ENCODE measurements at regions of chr4 and their contacts with region 1.

Region 1: DNA sequence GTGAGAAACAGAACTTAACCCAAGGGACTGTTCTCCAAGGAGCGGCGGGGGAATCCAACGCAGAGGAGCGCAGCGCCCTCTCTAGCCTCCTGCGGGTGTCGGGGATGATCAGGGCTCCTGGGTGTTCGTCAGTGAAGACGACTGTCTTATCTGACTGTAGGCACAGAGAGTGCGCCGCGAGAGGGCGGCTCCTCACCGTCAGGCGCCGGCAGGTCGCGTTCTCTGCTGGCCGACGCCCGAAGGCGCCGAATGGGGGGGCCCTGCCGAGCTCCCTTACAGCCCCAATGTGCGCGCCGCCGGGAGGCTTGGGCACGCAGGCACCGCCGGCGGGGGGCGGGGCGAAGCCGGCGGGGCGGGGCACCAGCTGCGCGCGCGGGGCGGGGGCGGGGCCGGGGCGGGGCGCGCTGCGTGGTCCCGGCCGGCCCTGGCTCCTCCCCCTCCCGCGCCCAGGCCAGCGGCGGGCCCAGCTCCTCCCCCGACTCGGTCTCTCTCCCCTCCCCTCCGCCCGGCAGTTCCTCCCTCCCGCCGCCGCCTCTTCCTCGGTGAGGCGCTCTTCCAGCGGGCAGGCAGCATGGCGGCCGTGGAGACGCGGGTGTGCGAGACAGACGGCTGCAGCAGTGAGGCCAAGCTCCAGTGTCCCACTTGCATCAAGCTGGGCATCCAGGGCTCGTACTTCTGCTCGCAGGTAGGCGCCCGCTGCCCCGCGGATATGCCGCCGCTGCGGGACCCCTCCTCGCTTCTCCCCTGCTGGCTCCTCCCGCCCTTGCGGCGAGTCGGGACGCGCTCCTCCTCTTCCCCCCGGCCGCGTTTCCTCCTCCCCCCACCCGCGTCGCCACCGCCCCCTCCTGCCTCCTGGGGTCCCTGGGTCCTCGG is at the start of gene METAP1:
- DNase-seq: peak; percentile 97
- ATAC-seq: peak; percentile 93
- H3K4me3 Mint-ChIP-seq: peak within 1 kb of the TSS; percentile 88
- H3K27ac Mint-ChIP-seq: peak within 1 kb of the TSS; percentile 97
- H3K4me1 Mint-ChIP-seq: peaks cover 26% of the 10 kb centered on the region
- H3K27me3 Mint-ChIP-seq: no peaks in the 10 kb centered on the region
- total RNA-seq, gene METAP1: 43.7 to 48.4 TPM

Region 2: DNA sequence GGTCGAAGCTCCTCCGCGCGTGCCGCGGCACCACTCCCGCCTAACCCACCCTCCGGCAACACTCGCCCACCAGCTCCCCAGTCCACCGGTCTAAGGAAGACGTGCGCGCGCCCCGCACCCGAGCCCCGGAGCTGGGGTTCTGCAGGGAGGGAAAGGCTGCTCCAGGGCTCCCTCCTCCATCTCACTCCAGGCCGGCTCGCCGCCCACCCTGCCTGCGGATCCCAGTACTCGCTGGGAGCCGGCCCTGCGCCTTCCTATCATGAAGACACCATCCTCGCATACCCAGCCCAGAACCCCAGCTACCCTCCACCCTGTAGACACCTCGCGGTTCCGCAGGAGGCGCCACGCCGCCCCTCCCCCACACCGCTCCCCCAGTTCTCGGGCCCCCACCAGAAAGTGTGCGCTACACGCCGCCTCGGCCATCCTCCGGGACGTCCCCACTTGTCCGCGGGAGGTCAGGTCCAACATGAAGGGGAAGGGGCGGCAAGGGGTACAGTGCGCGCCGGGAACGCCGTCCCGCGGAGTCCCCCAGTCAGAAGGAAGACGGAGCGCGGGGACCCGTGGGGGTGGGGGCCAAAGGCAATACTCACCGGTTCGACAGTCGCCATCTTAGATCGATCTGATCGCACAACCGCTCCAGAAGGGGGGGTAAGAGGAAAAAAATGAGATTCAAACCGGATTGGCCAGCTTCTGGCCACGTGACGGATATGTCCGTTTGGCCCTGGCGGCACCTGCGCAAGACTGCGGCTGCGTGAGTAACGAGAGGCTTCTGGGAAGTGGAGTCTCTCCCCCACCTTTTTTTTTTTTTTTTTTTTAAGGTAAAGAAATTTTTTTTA is 66.7 kb before region 1 on chr4 and contains the start of gene EIF4E:
- CTCF ChIA-PET with region 1: interaction called, 29 read pairs
- DNase-seq: peak; percentile 99
- ATAC-seq: peak; percentile 77
- H3K4me3 Mint-ChIP-seq: peak within 1 kb of the TSS; percentile 89
- H3K27ac Mint-ChIP-seq: peak within 1 kb of the TSS; percentile 100
- H3K4me1 Mint-ChIP-seq: peaks cover 38% of the 10 kb centered on the region
- H3K27me3 Mint-ChIP-seq: no peaks in the 10 kb centered on the region
- total RNA-seq, gene EIF4E: 92.1 to 122 TPM

Region 3: DNA sequence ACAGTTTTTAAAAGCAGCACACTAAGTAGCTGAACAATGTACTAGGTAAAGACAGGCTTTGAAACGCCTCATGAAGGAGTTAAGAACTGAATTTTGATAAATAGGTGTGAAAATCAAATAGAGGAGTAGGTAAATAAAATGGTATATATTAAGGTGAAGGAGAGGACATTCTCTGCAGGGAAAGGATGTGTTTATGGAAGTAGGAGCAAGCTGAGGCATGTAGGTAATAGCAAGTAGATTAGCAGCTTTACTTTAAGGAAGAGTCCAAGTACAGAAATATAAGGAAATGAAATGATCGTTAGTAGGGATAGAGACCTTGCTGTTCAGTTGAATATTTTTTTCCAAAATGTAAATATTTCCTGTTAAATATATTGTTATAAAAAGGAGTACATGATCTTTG is 12.6 kb after region 1 on chr4:
- CTCF ChIA-PET with region 1: interaction called, 18 read pairs
- DNase-seq: no peak
- ATAC-seq: no peak
- H3K4me3 Mint-ChIP-seq: no peak overlapping the region
- H3K27ac Mint-ChIP-seq: no peak overlapping the region
- H3K4me1 Mint-ChIP-seq: no peaks in the 10 kb centered on the region
- H3K27me3 Mint-ChIP-seq: no peaks in the 10 kb centered on the region

Region 4: GRCh38 chr4:99054428-99054994 is 59.1 kb after region 1 on chr4:
- CTCF ChIA-PET with region 1: interaction called, 151 read pairs
- DNase-seq: no peak
- ATAC-seq: peak; percentile 32
- H3K4me3 Mint-ChIP-seq: no peak overlapping the region
- H3K27ac Mint-ChIP-seq: peak overlapping the region; percentile 77
- H3K4me1 Mint-ChIP-seq: peaks cover 43% of the 10 kb centered on the region
- H3K27me3 Mint-ChIP-seq: no peaks in the 10 kb centered on the region

Region 5: GRCh38 chr4:99088481-99089365 is 93.3 kb after region 1 on chr4 and contains the start of gene ADH5:
- CTCF ChIA-PET with region 1: interaction called, 30 read pairs
- DNase-seq: peak; percentile 94
- ATAC-seq: peak; percentile 97
- H3K4me3 Mint-ChIP-seq: peak within 1 kb of the TSS; percentile 84
- H3K27ac Mint-ChIP-seq: peak within 1 kb of the TSS; percentile 95
- H3K4me1 Mint-ChIP-seq: peaks cover 40% of the 10 kb centered on the region
- H3K27me3 Mint-ChIP-seq: peaks cover 3% of the 10 kb centered on the region
- total RNA-seq, gene ADH5: 97.4 to 97.8 TPM

Region 6: DNA sequence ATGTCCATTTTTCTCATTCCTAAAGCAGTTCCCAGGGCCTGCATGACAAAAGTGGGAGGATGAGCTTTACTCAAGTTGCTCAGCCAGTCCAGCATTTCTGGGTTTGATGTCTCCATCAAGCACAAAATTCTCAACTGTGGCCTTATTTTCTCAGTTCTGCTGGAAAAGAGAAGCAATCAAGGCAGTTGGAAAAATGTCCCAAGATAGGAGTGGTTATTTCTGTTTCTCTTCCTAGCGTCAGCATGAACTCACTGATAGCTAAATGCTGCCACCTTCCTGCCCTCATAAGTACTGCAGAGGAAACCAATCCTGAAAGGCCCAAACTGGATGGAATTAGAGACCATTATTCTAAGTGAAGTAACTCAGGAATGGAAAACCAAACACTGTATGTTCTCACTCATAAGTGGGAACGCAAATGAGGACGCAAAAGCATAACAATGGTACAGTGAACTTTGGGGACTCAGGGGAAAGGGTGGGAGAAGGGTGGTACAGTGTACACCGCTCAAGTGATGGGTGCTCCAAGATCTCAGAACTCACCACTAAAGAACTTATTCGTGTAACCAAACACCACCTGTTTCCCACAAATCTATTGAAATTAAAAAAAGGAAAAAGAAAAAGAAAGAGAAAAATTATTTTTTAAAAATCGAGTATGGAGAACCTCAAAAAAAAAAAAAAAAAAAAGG is 410.2 kb after region 1 on chr4:
- CTCF ChIA-PET with region 1: interaction called, 28 read pairs
- DNase-seq: peak; percentile 67
- ATAC-seq: peak; percentile 45
- H3K4me3 Mint-ChIP-seq: no peak overlapping the region
- H3K27ac Mint-ChIP-seq: no peak overlapping the region
- H3K4me1 Mint-ChIP-seq: peaks cover 22% of the 10 kb centered on the region
- H3K27me3 Mint-ChIP-seq: peaks cover 30% of the 10 kb centered on the region

Region 7: DNA sequence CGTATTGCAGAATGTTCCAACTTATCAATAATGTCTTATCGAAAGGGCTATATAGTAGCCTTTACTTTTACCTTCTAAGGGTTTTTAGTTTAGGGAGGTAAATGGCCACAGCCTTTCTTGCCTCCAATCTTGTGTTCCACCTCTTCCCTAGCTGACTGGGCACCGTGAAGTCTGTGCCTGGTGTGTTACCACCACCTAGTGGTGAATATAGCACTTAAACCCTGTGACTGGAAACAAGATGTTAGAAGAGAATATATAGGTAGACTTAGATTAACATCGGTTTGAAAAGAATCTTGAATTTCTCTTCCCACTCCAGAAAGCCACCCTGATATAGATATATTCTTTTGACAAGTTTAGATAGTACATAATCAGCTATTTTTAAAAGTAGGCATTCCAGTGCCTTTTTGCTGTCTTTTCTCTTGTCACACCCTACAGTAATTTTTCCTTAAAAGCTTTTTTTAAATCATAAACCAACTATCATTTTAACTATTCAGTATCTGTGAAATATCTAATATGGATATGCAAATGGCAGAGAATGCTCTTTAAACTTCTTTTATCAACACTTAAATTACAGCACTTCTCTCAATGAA is 467.6 kb after region 1 on chr4:
- CTCF ChIA-PET with region 1: interaction called, 12 read pairs
- DNase-seq: peak; percentile 66
- ATAC-seq: peak; percentile 51
- H3K4me3 Mint-ChIP-seq: no peak overlapping the region
- H3K27ac Mint-ChIP-seq: no peak overlapping the region
- H3K4me1 Mint-ChIP-seq: no peaks in the 10 kb centered on the region
- H3K27me3 Mint-ChIP-seq: peaks cover 37% of the 10 kb centered on the region